Activated T-helper 1 cell treated with anti-CD3 and anti-CD28 coated beads, Interleukin-12 subunit alpha, Interleukin-12 subunit beta, Interleukin-2, Interleukin-4 antibody, amounts not matched to agents 30 ng/mL and 10 ng/mL and 1 ng/mL, durations not matched to agents 14 hours and 24 hours and 36 hours (primary cell): ENCODE measurements at regions of chr7 and their contacts with region 1.

Region 1: GRCh38 chr7:128862571-128863432 is at the start of gene ATP6V1F:
- DNase-seq: peak; percentile 99
- H3K4me3 Mint-ChIP-seq: peak within 1 kb of the TSS; percentile 99
- H3K27ac Mint-ChIP-seq: peak within 1 kb of the TSS; percentile 96
- H3K4me1 Mint-ChIP-seq: peaks cover 19% of the 10 kb centered on the region
- H3K27me3 Mint-ChIP-seq: no peaks in the 10 kb centered on the region
- total RNA-seq, gene ATP6V1F: 131 and 134 TPM in 2 replicates

Region 2: DNA sequence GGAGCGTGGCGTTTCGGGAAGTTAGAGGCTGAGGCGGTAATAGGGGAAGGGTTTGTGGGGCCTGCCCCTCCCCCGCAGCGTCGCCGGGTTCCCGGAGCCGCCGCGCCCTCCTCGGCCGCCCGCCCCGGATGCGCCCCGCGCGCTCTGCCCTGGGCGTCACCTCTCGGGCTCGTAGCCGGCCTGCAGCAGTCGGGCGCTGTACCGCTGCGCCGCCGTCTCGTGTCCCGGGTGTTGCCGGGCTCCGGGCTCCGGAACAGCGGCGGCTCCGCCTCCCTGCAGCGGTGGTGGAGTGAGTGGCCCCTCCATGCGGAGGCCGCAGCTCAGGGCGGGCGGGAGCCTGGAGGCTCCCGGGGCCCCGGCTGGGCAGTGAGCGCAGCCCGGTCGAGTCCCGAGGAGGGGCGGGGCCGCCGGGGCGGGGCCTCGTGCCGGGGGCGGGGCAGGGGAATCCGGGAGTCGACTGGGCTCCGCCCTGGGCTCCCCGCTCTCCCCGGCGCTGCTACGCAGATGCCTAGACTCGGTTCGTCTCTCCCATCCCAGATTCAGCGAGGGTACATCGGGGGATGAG is 453.1 kb before region 1 on chr7 and contains the start of gene IMPDH1:
- intact Hi-C with region 1: loop called (anchors 2 kb)
- DNase-seq: peak; percentile 82
- H3K4me3 Mint-ChIP-seq: peak within 1 kb of the TSS; percentile 93
- H3K27ac Mint-ChIP-seq: peak within 1 kb of the TSS; percentile 80
- H3K4me1 Mint-ChIP-seq: peaks cover 36% of the 10 kb centered on the region
- H3K27me3 Mint-ChIP-seq: peaks cover 25% of the 10 kb centered on the region
- total RNA-seq, gene IMPDH1: 91.7 and 95.8 TPM in 2 replicates

Region 3: GRCh38 chr7:128530855-128531104 is 332.0 kb before region 1 on chr7:
- intact Hi-C with region 1: loop called (anchors 1 kb)
- DNase-seq: no peak
- H3K4me3 Mint-ChIP-seq: no peak overlapping the region
- H3K27ac Mint-ChIP-seq: no peak overlapping the region
- H3K4me1 Mint-ChIP-seq: peaks cover 40% of the 10 kb centered on the region
- H3K27me3 Mint-ChIP-seq: no peaks in the 10 kb centered on the region

Region 4: DNA sequence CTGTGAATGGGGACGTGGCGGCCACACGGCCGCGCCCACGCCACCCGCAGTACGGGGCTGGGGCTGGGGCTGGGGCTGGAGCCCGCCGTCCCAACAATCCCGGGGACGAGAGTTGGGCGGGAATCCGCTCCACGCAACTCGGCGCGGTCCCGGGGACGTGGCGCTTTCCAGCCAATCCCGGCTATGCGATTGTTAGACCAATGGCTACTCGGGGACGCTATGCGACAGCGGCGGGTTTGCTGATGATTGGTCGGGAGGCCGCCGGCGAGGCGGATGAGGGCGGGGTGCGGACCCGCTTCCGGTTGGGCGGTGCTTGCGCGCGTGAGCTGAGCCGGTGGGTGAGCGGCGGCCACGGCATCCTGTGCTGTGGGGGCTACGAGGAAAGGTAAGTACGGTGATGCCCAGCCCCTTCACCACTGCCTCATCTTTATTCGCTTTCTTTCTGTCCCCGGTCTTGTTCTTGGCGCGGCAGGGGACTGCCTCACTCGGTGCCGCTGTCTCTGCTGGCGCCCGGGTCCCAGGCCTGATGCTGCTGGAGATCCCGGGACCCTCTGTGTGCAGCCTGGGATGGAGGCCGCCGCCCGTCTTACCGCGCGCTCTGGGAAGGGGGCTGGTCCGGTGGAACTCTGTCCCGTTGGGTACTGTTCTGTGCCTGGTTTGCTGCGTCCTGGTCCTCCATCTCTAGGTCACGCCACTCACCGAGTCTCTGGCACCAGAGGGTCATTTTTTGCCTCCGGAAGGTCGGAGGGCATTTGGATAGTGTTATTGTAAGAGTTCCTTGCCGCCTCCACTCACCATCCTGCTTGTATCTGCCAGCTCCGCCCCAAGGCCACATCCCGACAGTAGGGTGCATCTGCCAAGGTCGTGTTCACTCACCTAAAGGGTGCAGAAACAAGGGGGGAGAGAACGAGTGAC is 123.5 kb before region 1 on chr7 and contains the start of gene CALU:
- intact Hi-C with region 1: loop called (anchors 1 kb)
- DNase-seq: peak; percentile 95
- H3K4me3 Mint-ChIP-seq: peak within 1 kb of the TSS; percentile 100
- H3K27ac Mint-ChIP-seq: peak within 1 kb of the TSS; percentile 99
- H3K4me1 Mint-ChIP-seq: peaks cover 26% of the 10 kb centered on the region
- H3K27me3 Mint-ChIP-seq: no peaks in the 10 kb centered on the region
- total RNA-seq, gene CALU: 52.8 and 59.2 TPM in 2 replicates

Region 5: GRCh38 chr7:128791121-128791961 is 71.5 kb before region 1 on chr7:
- intact Hi-C with region 1: loop called (anchors 1 kb)
- DNase-seq: peak; percentile 70
- H3K4me3 Mint-ChIP-seq: peak overlapping the region; percentile 78
- H3K27ac Mint-ChIP-seq: no peak overlapping the region
- H3K4me1 Mint-ChIP-seq: peaks cover 4% of the 10 kb centered on the region
- H3K27me3 Mint-ChIP-seq: peaks cover 29% of the 10 kb centered on the region

Region 6: GRCh38 chr7:128883622-128884501 is 21.1 kb after region 1 on chr7:
- intact Hi-C with region 1: loop called (anchors 1 kb)
- DNase-seq: peak; percentile 69
- H3K4me3 Mint-ChIP-seq: no peak overlapping the region
- H3K27ac Mint-ChIP-seq: no peak overlapping the region
- H3K4me1 Mint-ChIP-seq: no peaks in the 10 kb centered on the region
- H3K27me3 Mint-ChIP-seq: no peaks in the 10 kb centered on the region